ENCODE measurements at regions of chr17 and their contacts with region 1.

Region 1: DNA sequence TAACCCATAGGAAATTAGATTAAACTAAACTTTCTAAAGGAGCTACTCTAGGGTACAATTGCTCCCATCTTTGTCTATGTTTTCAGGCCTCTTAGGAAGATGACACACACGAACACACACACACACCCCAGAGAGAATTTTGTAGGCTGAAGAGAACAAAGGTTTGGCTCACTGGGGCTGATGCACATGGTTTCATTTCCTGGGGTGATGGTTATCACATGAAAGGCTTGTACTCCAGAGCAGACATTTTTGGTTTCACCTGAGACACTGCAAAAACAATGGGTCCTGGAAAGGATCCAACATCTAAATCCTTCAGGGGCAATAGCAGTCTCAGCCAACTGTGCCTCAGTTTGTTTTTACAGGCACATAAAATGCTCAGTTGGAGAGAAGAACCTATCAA is 62.8 kb downstream of the GRB7 start:
- DNase-seq: peak; percentile 85
- H3K4me3 Mint-ChIP-seq: no peak overlapping the region
- H3K27ac Mint-ChIP-seq: no peak overlapping the region
- H3K4me1 Mint-ChIP-seq: peaks cover 17% of the 10 kb centered on the region
- H3K27me3 Mint-ChIP-seq: no peaks in the 10 kb centered on the region
- CTCF ChIP-seq: no peak

Region 2: GRCh38 chr17:39636927-39637736 is 163.4 kb before region 1 on chr17 and contains the start of gene STARD3:
- CTCF ChIA-PET with region 1: interaction called, 73 read pairs
- intact Hi-C with region 1: no loop called
- DNase-seq: no peak
- H3K4me3 Mint-ChIP-seq: peak within 1 kb of the TSS; percentile 71
- H3K27ac Mint-ChIP-seq: peak within 1 kb of the TSS; percentile 28
- H3K4me1 Mint-ChIP-seq: peaks cover 61% of the 10 kb centered on the region
- H3K27me3 Mint-ChIP-seq: peaks cover 5% of the 10 kb centered on the region
- CTCF ChIP-seq: no peak
- total RNA-seq, gene STARD3: 2,579 and 2,697 TPM in 2 replicates

Region 3: DNA sequence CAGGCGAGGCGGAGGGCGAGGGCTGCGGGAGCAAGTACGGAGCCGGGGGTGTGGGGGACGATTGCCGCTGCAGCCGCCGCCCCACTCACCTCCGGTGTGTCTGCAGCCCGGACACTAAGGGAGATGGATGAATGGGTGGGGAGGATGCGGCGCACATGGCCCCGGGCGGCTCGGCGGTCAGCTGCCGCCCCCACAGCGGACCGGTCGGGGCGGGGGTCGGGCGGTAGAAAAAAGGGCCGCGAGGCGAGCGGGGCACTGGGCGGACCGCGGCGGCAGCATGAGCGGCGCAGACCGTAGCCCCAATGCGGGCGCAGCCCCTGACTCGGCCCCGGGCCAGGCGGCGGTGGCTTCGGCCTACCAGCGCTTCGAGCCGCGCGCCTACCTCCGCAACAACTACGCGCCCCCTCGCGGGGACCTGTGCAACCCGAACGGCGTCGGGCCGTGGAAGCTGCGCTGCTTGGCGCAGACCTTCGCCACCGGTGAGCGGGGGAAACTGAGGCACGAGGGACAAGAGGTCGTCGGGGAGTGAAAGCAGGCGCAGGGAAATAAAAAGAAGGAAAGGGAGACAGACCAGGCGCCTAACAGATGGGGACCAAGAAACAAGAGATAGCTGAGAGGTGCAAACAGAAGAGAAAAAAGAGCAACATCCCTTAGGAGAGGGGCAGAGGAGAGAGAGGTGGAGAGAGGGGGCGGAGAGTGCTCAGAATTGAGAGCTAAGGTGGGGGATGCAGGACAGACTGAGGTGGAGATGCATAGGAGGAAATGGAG is 132.2 kb before region 1 on chr17 and contains the start of gene PNMT:
- CTCF ChIA-PET with region 1: interaction called, 145 read pairs
- intact Hi-C with region 1: no loop called
- DNase-seq: peak; percentile 100
- H3K4me3 Mint-ChIP-seq: peak within 1 kb of the TSS; percentile 24
- H3K27ac Mint-ChIP-seq: peak within 1 kb of the TSS; percentile 0
- H3K4me1 Mint-ChIP-seq: peaks cover 65% of the 10 kb centered on the region
- H3K27me3 Mint-ChIP-seq: peaks cover 69% of the 10 kb centered on the region
- CTCF ChIP-seq: no peak
- total RNA-seq, gene PNMT: 1.3 and 3.2 TPM in 2 replicates

Region 4: GRCh38 chr17:39704821-39705551 is 95.6 kb before region 1 on chr17:
- CTCF ChIA-PET with region 1: interaction called, 99 read pairs
- intact Hi-C with region 1: no loop called
- DNase-seq: peak; percentile 99
- H3K4me3 Mint-ChIP-seq: peak overlapping the region; percentile 71
- H3K27ac Mint-ChIP-seq: peak overlapping the region; percentile 67
- H3K4me1 Mint-ChIP-seq: peaks cover 92% of the 10 kb centered on the region
- H3K27me3 Mint-ChIP-seq: no peaks in the 10 kb centered on the region
- CTCF ChIP-seq: no peak

Region 5: GRCh38 chr17:39787743-39788484 is 12.6 kb before region 1 on chr17:
- CTCF ChIA-PET with region 1: interaction called, 881 read pairs
- intact Hi-C with region 1: no loop called
- DNase-seq: peak; percentile 80
- H3K4me3 Mint-ChIP-seq: no peak overlapping the region
- H3K27ac Mint-ChIP-seq: no peak overlapping the region
- H3K4me1 Mint-ChIP-seq: peaks cover 29% of the 10 kb centered on the region
- H3K27me3 Mint-ChIP-seq: no peaks in the 10 kb centered on the region
- CTCF ChIP-seq: no peak

Region 6: GRCh38 chr17:39916918-39917317 is 116.4 kb after region 1 on chr17:
- CTCF ChIA-PET with region 1: interaction called, 596 read pairs
- intact Hi-C with region 1: no loop called
- DNase-seq: peak; percentile 94
- H3K4me3 Mint-ChIP-seq: no peak overlapping the region
- H3K27ac Mint-ChIP-seq: no peak overlapping the region
- H3K4me1 Mint-ChIP-seq: peaks cover 24% of the 10 kb centered on the region
- H3K27me3 Mint-ChIP-seq: no peaks in the 10 kb centered on the region
- CTCF ChIP-seq: no peak

Region 7: GRCh38 chr17:40038882-40039513 is 238.5 kb after region 1 on chr17:
- CTCF ChIA-PET with region 1: no interaction called
- intact Hi-C with region 1: no loop called
- DNase-seq: peak; percentile 92
- H3K4me3 Mint-ChIP-seq: no peak overlapping the region
- H3K27ac Mint-ChIP-seq: no peak overlapping the region
- H3K4me1 Mint-ChIP-seq: peaks cover 8% of the 10 kb centered on the region
- H3K27me3 Mint-ChIP-seq: no peaks in the 10 kb centered on the region
- CTCF ChIP-seq: no peak

Region 8: DNA sequence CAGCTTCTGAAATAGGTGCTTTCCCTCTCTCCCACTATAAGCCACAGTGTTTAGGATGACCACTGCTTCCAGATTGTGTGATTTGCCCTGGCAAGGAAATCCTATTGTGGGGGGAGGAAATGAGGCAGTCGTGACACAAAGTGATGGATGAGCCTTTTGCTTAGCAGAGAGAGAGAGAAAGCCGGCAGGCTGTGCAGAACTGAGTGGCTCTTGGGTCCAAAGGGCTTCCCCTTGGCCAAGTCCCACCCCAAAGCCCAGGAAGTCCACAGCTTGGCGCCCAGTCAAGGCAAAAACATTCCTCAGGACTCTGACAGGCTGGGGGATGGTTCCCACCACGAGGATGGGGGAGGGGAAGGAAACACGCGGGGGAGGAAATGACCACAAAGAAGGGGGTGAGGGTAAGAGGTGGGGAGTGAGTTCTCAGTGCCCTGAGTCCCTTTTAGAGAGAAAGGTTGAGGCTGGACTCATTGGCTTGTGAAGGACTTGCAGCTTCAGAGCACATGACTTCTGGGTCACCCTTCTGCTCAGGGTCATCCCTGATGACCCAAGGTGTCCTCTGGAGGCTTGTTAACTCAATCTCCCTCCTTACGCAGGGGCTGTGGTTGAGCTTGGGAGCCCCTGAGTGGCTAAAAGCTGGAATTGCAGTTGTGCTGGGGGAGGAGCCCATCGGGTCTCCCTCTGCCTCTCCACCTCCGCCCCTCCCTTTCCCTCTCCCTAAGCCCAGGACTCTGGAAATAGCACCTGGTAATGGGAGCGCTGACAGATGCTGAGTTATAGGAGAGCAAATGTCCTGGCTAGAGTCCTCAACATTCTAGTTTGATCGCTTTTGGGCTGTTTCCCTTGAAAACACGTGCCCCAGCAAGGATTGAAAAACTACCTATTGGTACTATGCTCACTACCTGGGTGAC is 310.9 kb after region 1 on chr17:
- CTCF ChIA-PET with region 1: no interaction called
- intact Hi-C with region 1: no loop called
- DNase-seq: peak; percentile 100
- H3K4me3 Mint-ChIP-seq: peak overlapping the region; percentile 13
- H3K27ac Mint-ChIP-seq: peak overlapping the region; percentile 74
- H3K4me1 Mint-ChIP-seq: peaks cover 70% of the 10 kb centered on the region
- H3K27me3 Mint-ChIP-seq: no peaks in the 10 kb centered on the region
- CTCF ChIP-seq: no peak

Region 9: DNA sequence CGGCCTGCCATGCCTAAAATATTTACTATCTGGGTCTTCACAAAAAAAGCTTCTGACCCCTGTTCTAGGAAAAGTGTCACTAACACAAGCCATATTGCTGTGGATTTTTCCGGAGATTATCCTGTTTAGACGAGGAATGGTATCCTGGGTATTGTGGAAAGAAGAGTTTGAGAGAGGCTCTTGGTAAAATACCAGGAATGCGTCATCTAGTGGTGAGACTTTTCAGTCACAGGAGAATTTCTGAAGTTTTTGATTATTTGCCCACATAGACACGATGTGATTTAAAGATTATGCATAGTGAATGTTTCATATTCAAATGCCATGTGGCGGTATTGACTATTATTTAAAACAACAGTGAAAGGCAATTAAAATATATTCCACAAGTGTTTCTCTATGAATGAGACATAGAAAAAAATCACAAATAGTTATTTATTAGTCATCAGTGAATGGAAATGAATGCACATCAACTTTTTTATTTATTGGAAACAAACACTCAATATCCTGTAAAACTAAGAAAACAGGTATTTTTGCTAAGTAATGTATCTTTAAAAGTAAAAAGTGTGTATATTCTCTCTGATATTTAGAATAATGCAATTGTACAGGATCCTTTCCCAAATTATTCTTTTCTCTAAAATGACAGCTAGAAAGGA is 991.4 kb after region 1 on chr17:
- CTCF ChIA-PET with region 1: no interaction called
- intact Hi-C with region 1: no loop called
- DNase-seq: peak; percentile 59
- H3K4me3 Mint-ChIP-seq: no peak overlapping the region
- H3K27ac Mint-ChIP-seq: no peak overlapping the region
- H3K4me1 Mint-ChIP-seq: no peaks in the 10 kb centered on the region
- H3K27me3 Mint-ChIP-seq: peaks cover 40% of the 10 kb centered on the region
- CTCF ChIP-seq: peak; percentile 100